Activated naive CD4-positive, alpha-beta T cell treated with anti-CD3 and anti-CD28 coated beads for 36 hours (primary cell): ENCODE measurements at regions of chr6 and their contacts with region 1.

Region 1: DNA sequence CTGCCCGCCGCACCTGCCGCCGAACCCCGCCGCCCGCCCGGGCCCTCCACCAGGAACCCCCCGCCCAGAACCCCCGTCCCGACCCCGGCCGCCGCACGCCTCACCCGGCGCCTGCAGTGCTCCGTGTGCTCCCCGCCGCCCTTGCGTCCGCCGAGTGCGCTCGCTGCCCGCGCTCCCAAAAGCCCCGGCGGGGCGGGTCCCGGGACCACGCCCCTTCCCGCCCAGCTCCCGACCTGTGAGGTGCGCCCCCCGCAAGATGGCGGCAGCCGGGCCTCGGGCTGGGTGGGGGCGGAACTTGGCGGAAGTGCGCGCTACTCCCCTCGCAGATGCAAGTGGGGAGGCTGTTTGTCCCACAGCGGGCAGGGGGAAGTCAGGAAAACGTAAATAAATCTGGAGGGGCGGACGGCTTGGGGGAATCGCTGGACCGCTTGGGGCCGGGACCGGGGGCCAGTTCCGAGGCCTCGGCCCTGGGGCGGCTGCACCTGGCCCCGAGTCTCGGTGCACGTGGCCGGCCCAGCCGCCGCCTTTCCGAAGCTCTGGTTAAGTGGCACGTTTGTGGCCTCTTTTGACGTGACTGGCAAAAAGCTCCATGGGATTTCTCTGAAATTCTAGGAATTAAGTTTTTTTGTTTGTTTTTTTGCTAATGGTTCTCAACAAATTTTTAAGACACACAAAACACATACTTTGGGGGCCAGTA is at the start of gene EZR:
- DNase-seq: peak; percentile 87
- H3K4me3 Mint-ChIP-seq: peak within 1 kb of the TSS; percentile 97
- H3K27ac Mint-ChIP-seq: peak within 1 kb of the TSS; percentile 98
- H3K4me1 Mint-ChIP-seq: peaks cover 47% of the 10 kb centered on the region
- H3K27me3 Mint-ChIP-seq: no peaks in the 10 kb centered on the region
- total RNA-seq, gene EZR: 229 to 230 TPM

Region 2: GRCh38 chr6:158213925-158214674 is 605.3 kb before region 1 on chr6:
- CTCF ChIA-PET with region 1: no interaction called
- intact Hi-C with region 1: loop called (anchors 5 kb)
- DNase-seq: peak; percentile 68
- H3K4me3 Mint-ChIP-seq: no peak overlapping the region
- H3K27ac Mint-ChIP-seq: no peak overlapping the region
- H3K4me1 Mint-ChIP-seq: peaks cover 8% of the 10 kb centered on the region
- H3K27me3 Mint-ChIP-seq: no peaks in the 10 kb centered on the region

Region 3: DNA sequence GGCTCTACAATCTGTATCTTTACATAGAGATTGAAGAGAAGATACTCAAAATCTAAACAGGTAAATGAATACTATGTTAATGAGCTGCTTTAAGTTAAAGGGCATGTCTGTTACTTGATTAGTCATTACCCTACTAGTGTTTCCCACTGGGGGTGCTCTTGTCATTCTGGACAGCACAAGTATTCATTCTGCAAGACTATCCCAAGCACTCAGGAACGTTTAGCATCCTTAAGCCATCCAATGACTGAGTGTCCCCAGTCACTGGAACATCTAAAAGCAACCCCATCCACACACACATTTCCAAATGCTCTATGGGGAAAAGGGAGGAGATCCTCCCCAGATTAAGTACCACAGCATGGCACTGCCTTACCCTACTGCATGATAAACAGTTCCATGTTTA is 25.9 kb before region 1 on chr6:
- CTCF ChIA-PET with region 1: no interaction called
- intact Hi-C with region 1: loop called (anchors 1 kb)
- DNase-seq: peak; percentile 43
- H3K4me3 Mint-ChIP-seq: no peak overlapping the region
- H3K27ac Mint-ChIP-seq: peak overlapping the region; percentile 24
- H3K4me1 Mint-ChIP-seq: peaks cover 88% of the 10 kb centered on the region
- H3K27me3 Mint-ChIP-seq: no peaks in the 10 kb centered on the region

Region 4: DNA sequence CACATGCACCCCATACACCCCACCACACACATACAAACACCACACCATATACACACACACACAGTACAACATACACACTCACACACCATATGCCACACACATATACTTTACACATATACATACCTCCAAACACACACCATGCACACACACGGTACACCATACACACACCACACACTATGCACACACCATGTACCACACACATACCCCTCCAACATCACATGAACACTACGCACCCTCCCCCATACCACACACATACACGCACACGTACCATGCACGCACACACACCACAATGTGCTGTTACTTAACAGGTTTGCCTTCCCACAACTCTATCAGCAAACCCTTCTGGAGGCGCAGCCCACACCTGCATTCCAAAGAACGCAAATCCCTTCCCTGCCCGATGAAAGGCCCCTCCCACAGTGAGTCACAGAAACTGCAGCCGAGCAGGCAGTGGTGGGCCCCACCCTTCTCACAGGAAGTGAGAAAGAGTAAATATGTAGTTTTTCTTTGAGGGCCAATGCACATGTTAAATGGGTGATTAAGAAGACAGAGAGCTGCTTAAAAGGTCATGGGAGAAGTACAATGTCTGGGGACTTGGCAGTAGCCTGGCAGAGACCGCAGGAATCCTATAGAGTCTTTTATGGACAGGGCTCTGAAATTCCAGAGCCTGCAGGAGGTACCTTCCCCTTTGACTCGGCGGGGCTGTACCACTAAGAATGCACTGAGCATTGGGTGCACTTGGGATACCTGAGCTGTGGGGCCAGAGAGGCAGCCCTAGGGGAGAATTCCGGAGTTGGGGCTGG is 33.9 kb after region 1 on chr6:
- CTCF ChIA-PET with region 1: no interaction called
- intact Hi-C with region 1: loop called (anchors 1 kb)
- DNase-seq: peak; percentile 95
- H3K4me3 Mint-ChIP-seq: no peak overlapping the region
- H3K27ac Mint-ChIP-seq: no peak overlapping the region
- H3K4me1 Mint-ChIP-seq: peaks cover 29% of the 10 kb centered on the region
- H3K27me3 Mint-ChIP-seq: no peaks in the 10 kb centered on the region

Region 5: DNA sequence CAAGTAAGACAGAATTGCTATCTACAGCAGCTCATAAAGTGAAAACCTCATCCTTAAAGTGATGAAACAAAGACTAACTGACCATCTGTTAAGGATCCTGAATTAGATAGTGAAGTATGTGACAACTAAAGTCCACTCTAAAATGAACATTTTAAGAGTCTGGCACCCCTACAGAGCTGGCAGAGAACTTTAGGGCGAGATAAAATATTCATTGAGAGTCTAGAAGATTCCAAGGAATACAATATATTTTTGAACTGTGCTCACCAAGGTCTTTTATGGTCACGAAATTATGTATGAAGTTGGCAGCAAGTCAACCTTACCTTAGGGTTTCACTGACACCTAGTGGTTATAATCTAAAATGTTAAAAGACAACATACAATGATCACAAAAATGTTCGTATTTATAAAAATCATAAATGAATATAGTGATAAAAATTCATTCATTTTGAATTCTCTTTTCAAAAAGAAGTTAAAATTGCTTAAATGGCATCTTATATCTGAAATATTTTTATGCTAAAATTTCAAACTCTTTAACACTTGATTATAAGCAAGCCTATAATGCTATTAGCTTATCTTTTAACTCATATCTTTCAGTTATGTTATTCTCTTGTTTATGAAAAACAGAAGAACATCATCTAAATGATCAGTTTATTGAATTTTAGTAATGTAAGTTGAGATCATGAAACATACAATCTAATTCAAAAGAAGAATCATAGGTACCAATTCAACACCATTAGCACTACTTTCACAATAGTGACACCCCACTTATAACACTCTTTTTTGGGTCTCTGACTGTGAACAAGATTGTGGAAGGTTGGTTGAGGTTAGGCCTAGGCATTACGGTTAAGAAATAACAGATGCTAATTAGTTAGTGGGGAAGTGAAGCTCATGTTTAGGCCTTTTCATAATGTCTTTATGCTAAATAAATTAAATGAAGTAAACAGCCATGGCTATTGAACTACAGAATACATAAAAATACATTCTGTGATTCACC is 153.2 kb after region 1 on chr6:
- CTCF ChIA-PET with region 1: interaction called, 9 read pairs
- intact Hi-C with region 1: loop called (anchors 1 kb)
- DNase-seq: no peak
- H3K4me3 Mint-ChIP-seq: no peak overlapping the region
- H3K27ac Mint-ChIP-seq: no peak overlapping the region
- H3K4me1 Mint-ChIP-seq: no peaks in the 10 kb centered on the region
- H3K27me3 Mint-ChIP-seq: no peaks in the 10 kb centered on the region

Region 6: DNA sequence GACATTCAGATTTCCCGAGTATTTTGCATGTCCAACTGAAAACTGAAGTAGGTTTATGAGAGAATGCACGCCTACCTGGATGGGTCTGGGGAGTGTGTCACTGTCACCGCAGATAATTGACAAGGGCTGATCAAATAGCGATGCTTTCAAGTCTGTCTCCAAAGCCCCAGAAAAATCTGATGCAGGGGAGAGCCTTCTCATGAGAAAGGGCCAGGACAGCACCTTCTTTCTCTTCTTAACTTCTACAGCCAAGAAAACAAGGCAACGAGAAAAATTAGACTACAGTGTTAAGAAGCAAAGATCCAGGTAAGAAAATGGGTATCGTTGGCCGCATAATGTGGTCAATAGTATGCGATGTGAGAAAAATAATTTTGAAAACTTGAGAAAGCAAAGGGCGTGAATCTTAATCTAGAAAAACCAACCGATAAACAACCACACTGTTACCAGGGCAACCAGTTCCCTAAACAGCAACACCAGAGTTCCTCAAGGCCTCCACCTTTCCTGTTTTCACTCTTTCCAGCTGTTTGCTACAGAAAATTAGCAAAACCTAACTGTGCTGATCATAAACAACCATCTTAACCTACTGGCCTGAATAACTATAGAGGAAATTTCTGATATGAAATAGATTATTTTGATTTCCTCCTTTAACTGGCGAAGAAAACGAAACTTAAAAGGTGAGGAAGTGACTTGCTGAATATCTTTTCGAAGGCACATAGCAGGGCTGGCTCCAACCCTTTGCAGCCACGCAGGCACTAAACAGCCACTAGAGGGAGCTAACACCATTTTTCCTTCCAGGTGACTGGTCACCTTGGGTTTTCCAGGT is 222.9 kb after region 1 on chr6:
- CTCF ChIA-PET with region 1: no interaction called
- intact Hi-C with region 1: loop called (anchors 1 kb)
- DNase-seq: peak; percentile 86
- H3K4me3 Mint-ChIP-seq: peak overlapping the region; percentile 96
- H3K27ac Mint-ChIP-seq: peak overlapping the region; percentile 98
- H3K4me1 Mint-ChIP-seq: peaks cover 69% of the 10 kb centered on the region
- H3K27me3 Mint-ChIP-seq: no peaks in the 10 kb centered on the region